ENCODE measurements at regions of chr1 and their contacts with region 1.

Region 1: GRCh38 chr1:66242646-66243547 is 291.1 kb upstream of the SGIP1 start:
- DNase-seq: peak; percentile 83
- ATAC-seq: peak; percentile 95
- H3K4me3 Mint-ChIP-seq: no peak overlapping the region
- H3K27ac Mint-ChIP-seq: no peak overlapping the region
- H3K4me1 Mint-ChIP-seq: peaks cover 3% of the 10 kb centered on the region; the same call in 1 of the 2 replicates
- H3K27me3 Mint-ChIP-seq: no peaks in the 10 kb centered on the region
- CTCF ChIP-seq: peak; percentile 76

Region 2: DNA sequence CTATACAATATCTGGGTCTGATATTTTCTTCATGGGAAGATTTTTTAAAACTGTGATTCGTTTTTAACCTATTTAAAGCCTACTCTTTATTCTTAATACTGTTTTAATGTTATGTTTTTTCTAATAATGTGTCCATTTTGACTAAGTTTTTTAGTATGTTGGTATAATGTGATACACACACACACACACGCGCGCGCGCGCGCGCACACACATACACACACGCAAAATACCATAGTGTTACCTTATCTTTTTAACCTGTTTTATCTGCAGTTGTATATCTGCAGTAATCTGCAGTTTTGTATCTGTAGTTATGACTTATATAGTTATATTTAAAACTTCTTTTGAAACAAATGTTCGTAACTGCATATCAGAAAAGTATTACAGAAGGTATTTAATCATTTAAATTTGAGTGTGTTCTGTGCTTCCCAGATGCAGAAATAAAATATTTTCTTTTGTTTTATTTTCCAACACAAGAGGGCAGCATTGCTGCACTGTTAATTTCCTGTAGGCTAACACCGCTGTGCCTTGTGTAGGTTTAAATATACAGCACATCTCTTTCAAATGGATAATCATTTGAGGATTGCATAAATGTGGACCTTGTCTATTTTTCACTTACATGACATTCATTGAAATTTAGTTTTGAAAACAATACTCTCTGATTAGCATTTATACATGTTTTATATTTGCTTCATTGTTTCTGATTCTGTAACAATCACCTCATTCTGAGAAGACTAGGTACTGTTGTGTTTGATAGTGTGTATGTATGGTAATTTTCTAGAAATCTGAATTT is 284.1 kb before region 1 on chr1:
- CTCF ChIA-PET with region 1: interaction called, 31 read pairs
- POLR2A ChIA-PET with region 1: no interaction called
- DNase-seq: no peak
- ATAC-seq: no peak; the same call in 1 of the 2 replicates
- H3K4me3 Mint-ChIP-seq: no peak overlapping the region
- H3K27ac Mint-ChIP-seq: no peak overlapping the region
- H3K4me1 Mint-ChIP-seq: no peaks in the 10 kb centered on the region
- H3K27me3 Mint-ChIP-seq: no peaks in the 10 kb centered on the region
- CTCF ChIP-seq: peak; percentile 66

Region 3: DNA sequence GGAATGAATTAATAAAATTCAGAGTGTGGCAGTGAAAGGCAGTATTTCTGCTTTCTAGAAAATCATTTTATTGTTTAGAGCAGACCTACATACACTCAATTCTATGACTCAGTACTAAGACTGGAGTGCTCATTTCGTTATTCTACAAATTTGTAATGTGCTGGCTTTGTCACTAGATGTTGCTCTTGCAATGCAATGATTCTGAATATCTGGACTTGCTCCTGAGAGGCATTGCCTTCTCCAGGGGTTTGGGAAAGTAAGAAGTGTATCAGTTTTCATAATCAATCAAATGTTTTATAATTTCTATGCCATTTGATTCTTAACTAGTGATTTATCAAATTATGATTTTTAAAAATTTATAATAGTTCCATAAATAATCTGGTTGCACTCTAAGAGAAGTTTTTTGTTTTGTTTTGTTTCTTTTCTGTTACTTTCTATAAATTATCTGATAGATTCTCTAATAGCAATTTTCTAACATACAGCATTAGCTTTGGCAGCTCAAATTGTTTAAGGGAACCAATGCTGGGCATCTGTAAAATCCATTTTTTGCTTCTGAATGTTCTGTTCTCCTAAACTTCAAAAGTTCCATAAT is 10.5 kb after region 1 on chr1:
- CTCF ChIA-PET with region 1: interaction called, 18 read pairs
- POLR2A ChIA-PET with region 1: no interaction called
- DNase-seq: no peak
- ATAC-seq: peak; percentile 74
- H3K4me3 Mint-ChIP-seq: no peak overlapping the region
- H3K27ac Mint-ChIP-seq: no peak overlapping the region
- H3K4me1 Mint-ChIP-seq: peaks cover 44% of the 10 kb centered on the region
- H3K27me3 Mint-ChIP-seq: no peaks in the 10 kb centered on the region
- CTCF ChIP-seq: no peak

Region 4: GRCh38 chr1:66490816-66491215 is 247.9 kb after region 1 on chr1:
- CTCF ChIA-PET with region 1: no interaction called
- POLR2A ChIA-PET with region 1: no interaction called
- DNase-seq: no peak
- ATAC-seq: no peak
- H3K4me3 Mint-ChIP-seq: no peak overlapping the region
- H3K27ac Mint-ChIP-seq: no peak overlapping the region
- H3K4me1 Mint-ChIP-seq: no peaks in the 10 kb centered on the region
- H3K27me3 Mint-ChIP-seq: no peaks in the 10 kb centered on the region
- CTCF ChIP-seq: no peak

Region 5: GRCh38 chr1:66503841-66504470 is 261.1 kb after region 1 on chr1:
- CTCF ChIA-PET with region 1: interaction called, 14 read pairs
- POLR2A ChIA-PET with region 1: no interaction called
- DNase-seq: peak; percentile 59
- ATAC-seq: peak; percentile 96
- H3K4me3 Mint-ChIP-seq: no peak overlapping the region
- H3K27ac Mint-ChIP-seq: no peak overlapping the region
- H3K4me1 Mint-ChIP-seq: peaks cover 5% of the 10 kb centered on the region; the same call in 1 of the 2 replicates
- H3K27me3 Mint-ChIP-seq: no peaks in the 10 kb centered on the region
- CTCF ChIP-seq: peak; percentile 60